Activated naive CD4-positive, alpha-beta T cell treated with anti-CD3 and anti-CD28 coated beads for 36 hours (primary cell): ENCODE measurements at regions of chr7 and their contacts with region 1.

Region 1: DNA sequence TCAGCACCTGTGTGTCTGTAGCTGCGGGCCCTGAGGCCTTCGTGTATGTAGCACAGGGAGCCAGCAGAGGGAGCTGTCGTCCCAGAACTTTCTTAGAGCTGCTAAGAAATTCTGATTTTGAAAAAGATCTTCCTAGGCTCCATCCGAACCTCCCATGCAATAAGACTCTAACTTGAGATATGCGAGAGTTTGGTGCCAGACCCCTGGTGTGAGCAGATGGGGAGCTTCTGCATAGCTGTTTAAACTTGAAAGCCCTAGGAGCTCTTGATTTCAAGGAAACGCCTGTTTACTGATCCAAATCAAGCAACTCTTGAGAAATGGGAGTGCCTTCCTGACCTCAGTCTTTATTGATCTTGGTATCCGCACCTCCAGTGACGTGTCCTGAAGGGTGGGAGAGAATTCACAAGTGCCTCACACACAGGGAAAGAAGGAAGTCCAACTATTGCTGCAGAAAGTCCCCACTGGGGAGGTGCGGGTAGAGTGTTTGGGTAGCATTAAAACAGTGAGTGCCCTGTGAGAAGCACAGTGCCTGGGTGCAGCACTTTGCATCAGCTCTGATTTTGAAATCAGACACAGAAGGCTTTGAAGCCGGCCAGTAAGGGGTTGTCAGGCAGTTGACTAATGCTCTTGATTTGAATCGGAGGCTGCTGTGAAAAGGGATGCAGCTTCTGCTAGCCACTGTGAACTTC is 66.4 kb upstream of the STRIP2 start:
- DNase-seq: peak; percentile 93
- H3K4me3 Mint-ChIP-seq: peak overlapping the region; percentile 63
- H3K27ac Mint-ChIP-seq: peak overlapping the region; percentile 94
- H3K4me1 Mint-ChIP-seq: peaks cover 45% of the 10 kb centered on the region
- H3K27me3 Mint-ChIP-seq: no peaks in the 10 kb centered on the region

Region 2: DNA sequence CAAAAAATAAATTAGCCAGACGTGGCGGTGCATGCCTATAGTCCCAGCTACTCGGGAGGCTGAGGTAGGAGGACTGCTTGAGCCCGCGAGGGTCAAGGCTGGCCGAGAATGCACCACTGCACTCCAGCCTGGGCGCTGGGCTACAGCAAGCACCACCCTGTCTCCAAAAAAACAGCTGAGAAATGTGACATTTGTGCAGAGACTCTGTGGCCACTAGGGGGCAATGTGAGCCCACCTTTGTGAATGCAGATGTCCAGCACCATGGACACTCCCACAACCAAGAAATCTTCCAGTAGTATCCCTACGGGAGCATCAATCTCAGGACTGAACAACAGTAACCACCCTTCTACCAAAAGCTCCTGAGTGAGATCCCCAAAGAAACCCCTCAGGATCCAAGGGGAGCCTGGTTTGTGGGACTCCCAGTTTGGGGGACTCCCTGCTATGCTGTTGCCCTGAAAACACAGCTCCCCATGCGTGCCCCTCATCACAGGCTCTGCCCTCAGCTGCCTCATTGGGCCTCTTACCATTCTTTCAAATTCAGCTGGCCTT is 149.3 kb before region 1 on chr7:
- CTCF ChIA-PET with region 1: interaction called, 17 read pairs
- intact Hi-C with region 1: no loop called
- DNase-seq: peak; percentile 90
- H3K4me3 Mint-ChIP-seq: no peak overlapping the region
- H3K27ac Mint-ChIP-seq: no peak overlapping the region
- H3K4me1 Mint-ChIP-seq: peaks cover 17% of the 10 kb centered on the region
- H3K27me3 Mint-ChIP-seq: no peaks in the 10 kb centered on the region

Region 3: DNA sequence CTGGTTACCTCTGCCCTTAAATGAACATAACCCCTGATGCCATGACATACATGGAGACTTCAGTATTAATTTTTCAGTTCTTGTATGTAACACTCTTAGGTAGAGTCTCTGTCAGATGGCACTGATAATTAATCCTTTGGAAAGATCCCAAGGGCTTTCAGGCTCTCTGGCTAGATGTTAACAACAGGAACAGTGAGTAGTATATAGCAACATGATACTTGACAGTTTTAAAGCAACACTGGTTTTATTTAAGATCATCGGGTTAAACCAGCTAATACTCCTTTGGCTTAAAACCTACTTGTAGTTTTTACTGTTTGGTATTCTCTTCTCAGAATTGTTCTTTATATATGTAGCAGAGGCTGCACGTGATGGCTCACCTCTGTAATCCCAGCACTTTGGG is 115.7 kb before region 1 on chr7:
- CTCF ChIA-PET with region 1: no interaction called
- intact Hi-C with region 1: no loop called
- DNase-seq: no peak
- H3K4me3 Mint-ChIP-seq: no peak overlapping the region
- H3K27ac Mint-ChIP-seq: no peak overlapping the region
- H3K4me1 Mint-ChIP-seq: no peaks in the 10 kb centered on the region
- H3K27me3 Mint-ChIP-seq: no peaks in the 10 kb centered on the region

Region 4: DNA sequence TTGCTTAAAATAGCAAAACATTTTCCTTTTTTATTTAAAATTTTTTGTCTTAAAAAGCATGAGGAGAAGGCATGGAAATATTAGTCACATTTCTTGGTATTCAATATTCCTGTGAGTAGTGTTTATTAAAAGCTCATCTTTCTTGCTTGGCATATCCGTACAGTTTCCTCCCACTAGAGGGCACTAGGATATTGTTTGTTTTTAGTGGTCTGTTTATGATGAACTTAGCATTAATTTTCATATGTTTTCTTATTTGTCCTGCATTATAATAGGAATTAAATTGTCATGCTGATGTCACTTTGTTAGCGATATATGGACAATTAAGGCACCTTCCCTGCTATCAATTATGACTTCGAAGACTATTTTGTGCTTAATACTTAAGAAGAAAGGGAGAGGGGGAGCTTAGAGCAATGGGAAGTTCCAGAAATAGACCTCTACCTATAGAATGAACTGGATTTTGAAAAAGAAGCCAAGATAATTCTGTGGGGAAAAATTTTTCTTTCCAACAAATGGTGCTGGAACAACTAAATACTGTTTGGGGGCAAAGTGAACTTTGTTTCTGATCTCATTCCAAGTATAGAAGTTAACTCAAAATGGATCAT is 24.6 kb before region 1 on chr7:
- CTCF ChIA-PET with region 1: interaction called, 126 read pairs
- intact Hi-C with region 1: loop called (anchors 1 kb)
- DNase-seq: peak; percentile 39
- H3K4me3 Mint-ChIP-seq: no peak overlapping the region
- H3K27ac Mint-ChIP-seq: no peak overlapping the region
- H3K4me1 Mint-ChIP-seq: peaks cover 32% of the 10 kb centered on the region
- H3K27me3 Mint-ChIP-seq: no peaks in the 10 kb centered on the region

Region 5: DNA sequence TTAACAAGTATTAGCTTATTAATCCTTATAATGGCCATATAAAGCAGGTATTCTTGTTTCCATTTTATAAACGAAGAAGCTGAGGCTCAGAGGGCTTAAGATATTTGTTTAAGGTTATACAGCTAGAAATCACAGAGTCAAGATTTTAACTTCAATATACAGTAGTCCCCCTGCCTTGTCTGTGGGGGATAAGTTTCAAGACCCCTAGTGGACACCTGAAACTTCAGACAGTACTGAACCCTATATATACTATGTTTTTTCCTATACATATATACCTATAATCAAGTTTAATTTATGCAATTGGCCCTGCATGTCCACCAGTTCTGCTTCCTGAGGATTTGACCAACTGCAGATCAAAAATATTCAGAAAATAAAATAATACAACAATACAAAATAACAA is 22.0 kb after region 1 on chr7:
- CTCF ChIA-PET with region 1: interaction called, 26 read pairs
- intact Hi-C with region 1: no loop called
- DNase-seq: no peak
- H3K4me3 Mint-ChIP-seq: no peak overlapping the region
- H3K27ac Mint-ChIP-seq: no peak overlapping the region
- H3K4me1 Mint-ChIP-seq: peaks cover 6% of the 10 kb centered on the region
- H3K27me3 Mint-ChIP-seq: no peaks in the 10 kb centered on the region

Region 6: DNA sequence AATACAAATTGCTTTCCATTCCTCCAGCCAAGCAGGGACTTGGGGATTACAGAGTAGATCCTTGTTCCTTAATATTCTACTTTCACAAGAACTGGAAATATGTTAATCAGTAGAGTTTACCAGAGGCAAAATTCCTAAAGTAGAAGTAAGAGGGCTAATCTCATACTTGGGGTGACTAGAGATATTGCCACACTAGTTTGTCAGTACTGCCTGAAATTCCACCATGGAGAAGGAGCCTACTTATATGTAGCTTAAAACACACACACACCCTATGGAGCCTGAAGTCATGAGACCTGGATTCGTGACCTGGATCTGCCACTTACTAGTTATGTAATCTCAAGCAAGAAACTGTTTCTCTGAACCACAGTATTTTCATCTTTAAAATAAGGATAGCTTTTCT is 100.2 kb after region 1 on chr7:
- CTCF ChIA-PET with region 1: interaction called, 45 read pairs
- intact Hi-C with region 1: loop called (anchors 1 kb)
- DNase-seq: no peak
- H3K4me3 Mint-ChIP-seq: no peak overlapping the region
- H3K27ac Mint-ChIP-seq: no peak overlapping the region
- H3K4me1 Mint-ChIP-seq: peaks cover 12% of the 10 kb centered on the region
- H3K27me3 Mint-ChIP-seq: no peaks in the 10 kb centered on the region

Region 7: DNA sequence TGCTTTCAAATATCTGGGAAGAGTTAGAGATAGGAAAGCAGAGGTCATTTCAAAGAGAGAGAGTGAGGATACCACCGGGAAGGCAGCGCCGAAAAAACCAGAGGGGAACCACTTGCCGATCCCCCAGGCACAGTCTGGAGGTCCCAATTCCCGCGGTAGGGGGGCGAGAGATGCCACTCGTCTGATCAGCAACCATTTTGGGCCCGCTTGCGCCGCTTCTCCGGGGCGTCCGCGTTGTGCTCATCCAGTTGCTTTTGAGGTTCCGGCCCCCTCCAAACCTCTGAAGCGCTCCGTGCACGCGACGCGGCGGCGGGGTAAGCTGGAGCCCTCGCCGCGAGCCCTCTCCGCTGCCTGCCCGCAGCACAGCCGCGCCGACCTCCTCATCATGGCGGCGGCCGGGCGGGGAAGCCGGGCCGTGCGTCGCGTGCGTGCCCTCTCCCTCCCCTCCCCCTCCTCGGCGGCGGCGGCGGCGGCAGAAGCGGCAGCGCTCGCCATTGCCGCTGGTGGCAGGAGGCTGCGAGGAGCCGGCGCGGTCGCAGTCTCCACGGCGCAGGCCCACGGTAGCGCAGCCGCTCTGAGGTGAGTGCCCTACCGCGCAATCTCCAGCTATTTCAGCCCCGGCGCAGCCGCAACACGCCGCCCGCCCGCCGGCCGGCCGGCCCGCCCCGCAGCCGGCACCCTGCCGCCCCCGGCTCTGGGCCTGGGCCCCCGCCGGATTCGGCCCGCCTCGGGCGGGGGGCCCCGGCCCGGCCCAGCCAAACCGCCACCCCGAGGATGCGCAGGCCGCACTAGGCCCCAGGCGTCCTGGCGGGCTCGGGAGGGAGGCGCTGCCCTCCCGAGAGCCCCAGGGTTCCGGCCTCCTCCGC is 243.6 kb after region 1 on chr7 and contains the start of gene NRF1:
- CTCF ChIA-PET with region 1: interaction called, 5 read pairs
- intact Hi-C with region 1: loop called (anchors 1 kb)
- DNase-seq: peak; percentile 91
- H3K4me3 Mint-ChIP-seq: peak within 1 kb of the TSS; percentile 97
- H3K27ac Mint-ChIP-seq: peak within 1 kb of the TSS; percentile 98
- H3K4me1 Mint-ChIP-seq: peaks cover 56% of the 10 kb centered on the region
- H3K27me3 Mint-ChIP-seq: no peaks in the 10 kb centered on the region
- total RNA-seq, gene NRF1: 18.5 to 21.5 TPM

Region 8: DNA sequence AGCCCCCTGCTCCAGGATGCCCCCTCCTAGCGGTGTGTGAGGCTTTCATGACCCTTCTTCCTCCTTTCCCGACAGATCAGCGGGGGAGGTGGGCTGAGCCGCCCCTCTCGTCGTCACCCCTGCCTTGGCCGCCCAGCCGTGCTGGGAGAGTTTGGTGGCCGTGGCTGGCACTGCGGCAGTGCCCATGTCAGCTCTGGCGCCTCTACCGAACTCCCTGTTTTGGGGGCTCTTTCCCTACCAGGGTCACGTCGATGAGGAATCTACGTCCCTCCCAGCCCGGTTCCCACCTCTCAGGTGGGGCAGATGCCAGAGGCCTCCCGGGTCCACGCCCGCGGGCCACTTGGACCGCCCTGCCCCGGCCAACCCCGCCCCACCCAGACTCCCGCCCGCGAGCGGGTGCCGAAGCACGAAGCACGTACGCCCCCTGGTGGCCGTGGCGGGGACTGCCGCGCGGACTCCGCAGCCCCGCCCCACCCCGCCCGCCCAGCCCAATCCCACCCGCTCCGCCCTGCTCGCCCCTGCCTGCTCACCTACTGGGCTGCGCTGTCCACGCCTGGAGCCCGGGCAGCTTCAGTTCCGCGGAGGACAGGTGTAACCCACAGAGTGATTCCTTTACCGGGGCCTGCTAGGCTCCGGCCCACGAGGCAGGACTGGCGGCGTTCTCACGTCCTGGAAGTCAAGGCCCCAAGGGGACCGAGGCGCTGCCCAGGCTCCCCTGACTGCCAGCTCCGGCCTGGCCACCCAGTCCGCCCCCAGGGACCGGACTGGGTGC is 457.8 kb after region 1 on chr7:
- CTCF ChIA-PET with region 1: interaction called, 9 read pairs
- intact Hi-C with region 1: loop called (anchors 2 kb)
- DNase-seq: peak; percentile 89
- H3K4me3 Mint-ChIP-seq: peak overlapping the region; percentile 90
- H3K27ac Mint-ChIP-seq: no peak overlapping the region
- H3K4me1 Mint-ChIP-seq: peaks cover 21% of the 10 kb centered on the region
- H3K27me3 Mint-ChIP-seq: no peaks in the 10 kb centered on the region